Activated T-helper 1 cell treated with anti-CD3 and anti-CD28 coated beads, Interleukin-12 subunit alpha, Interleukin-12 subunit beta, Interleukin-2, Interleukin-4 antibody, amounts not matched to agents 30 ng/mL and 10 ng/mL and 1 ng/mL, durations not matched to agents 14 hours and 24 hours and 36 hours (primary cell): ENCODE measurements at regions of chr6 and their contacts with region 1.

Region 1: GRCh38 chr6:140809694-140810101 is 1323.0 kb upstream of the GJE1 start:
- DNase-seq: peak; percentile 30
- H3K4me3 Mint-ChIP-seq: no peak overlapping the region
- H3K27ac Mint-ChIP-seq: peak overlapping the region; percentile 75
- H3K4me1 Mint-ChIP-seq: peaks cover 16% of the 10 kb centered on the region
- H3K27me3 Mint-ChIP-seq: peaks cover 10% of the 10 kb centered on the region

Region 2: GRCh38 chr6:139600919-139601475 is 1208.7 kb before region 1 on chr6:
- intact Hi-C with region 1: loop called (anchors 10 kb)
- DNase-seq: no peak
- H3K4me3 Mint-ChIP-seq: no peak overlapping the region
- H3K27ac Mint-ChIP-seq: peak overlapping the region; percentile 10
- H3K4me1 Mint-ChIP-seq: peaks cover 7% of the 10 kb centered on the region
- H3K27me3 Mint-ChIP-seq: no peaks in the 10 kb centered on the region

Region 3: DNA sequence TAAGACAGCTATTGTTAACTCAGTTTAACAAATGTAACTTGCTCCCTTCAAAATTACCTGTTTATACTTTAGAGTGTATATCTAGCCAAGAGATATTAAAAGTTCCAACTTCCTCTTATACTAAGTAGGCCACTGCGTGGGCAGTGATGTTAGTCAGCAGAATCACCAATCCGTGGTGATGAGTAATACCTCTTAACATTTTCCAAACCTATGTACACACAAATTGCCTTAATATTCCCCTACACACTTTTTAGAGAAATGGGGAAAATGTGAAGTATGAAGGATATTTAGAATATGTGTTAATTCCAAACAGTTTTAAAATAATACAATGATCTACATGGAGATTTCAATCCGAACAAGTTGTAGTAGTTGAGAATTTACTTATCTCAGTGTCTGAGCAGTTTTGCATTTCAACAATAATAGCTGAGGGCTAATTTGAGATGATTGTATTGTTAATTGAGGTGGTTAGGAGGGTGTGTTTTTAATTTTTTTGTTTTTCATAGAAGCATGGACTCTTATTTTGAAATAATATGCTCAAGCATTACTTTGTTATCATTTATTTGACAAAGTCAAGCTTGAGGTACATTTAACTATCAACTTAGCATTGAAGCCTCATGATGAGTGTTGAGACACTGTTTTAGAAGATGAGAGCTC is 323.5 kb before region 1 on chr6:
- intact Hi-C with region 1: loop called (anchors 2 kb)
- DNase-seq: no peak
- H3K4me3 Mint-ChIP-seq: peak overlapping the region; percentile 51
- H3K27ac Mint-ChIP-seq: peak overlapping the region; percentile 41
- H3K4me1 Mint-ChIP-seq: peaks cover 24% of the 10 kb centered on the region
- H3K27me3 Mint-ChIP-seq: no peaks in the 10 kb centered on the region

Region 4: DNA sequence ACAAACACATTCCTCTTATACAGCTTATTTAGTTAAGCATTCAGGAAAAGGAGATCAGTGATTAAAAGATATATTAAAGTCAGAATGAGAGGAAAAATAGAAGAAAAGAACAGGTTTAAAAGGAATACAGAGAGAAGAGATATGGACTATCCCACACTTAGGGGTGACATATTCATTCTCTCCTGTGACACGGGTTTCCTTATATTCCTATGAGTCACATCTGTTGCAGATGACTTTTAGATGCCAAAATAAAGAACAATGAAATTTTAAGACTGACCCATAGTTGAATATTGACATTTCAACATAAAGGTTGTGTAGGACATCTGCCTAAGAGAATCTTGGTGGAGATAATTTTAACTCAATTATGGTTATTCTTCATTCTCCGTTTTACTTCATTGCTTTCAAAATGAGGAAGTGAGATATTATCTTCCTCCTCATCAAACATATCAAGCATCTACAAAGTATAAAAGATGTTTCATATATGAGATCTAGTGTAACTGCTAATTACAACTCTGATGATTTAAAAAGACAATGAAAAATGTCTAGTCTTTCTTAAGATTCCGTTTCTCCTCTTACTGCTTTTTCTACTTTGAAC is 98.6 kb before region 1 on chr6:
- intact Hi-C with region 1: loop called (anchors 1 kb)
- DNase-seq: no peak
- H3K4me3 Mint-ChIP-seq: no peak overlapping the region
- H3K27ac Mint-ChIP-seq: no peak overlapping the region
- H3K4me1 Mint-ChIP-seq: no peaks in the 10 kb centered on the region
- H3K27me3 Mint-ChIP-seq: no peaks in the 10 kb centered on the region

Region 5: GRCh38 chr6:140774080-140774505 is 35.6 kb before region 1 on chr6:
- intact Hi-C with region 1: loop called (anchors 1 kb)
- DNase-seq: peak; percentile 6
- H3K4me3 Mint-ChIP-seq: no peak overlapping the region
- H3K27ac Mint-ChIP-seq: no peak overlapping the region
- H3K4me1 Mint-ChIP-seq: peaks cover 23% of the 10 kb centered on the region
- H3K27me3 Mint-ChIP-seq: peaks cover 7% of the 10 kb centered on the region

Region 6: DNA sequence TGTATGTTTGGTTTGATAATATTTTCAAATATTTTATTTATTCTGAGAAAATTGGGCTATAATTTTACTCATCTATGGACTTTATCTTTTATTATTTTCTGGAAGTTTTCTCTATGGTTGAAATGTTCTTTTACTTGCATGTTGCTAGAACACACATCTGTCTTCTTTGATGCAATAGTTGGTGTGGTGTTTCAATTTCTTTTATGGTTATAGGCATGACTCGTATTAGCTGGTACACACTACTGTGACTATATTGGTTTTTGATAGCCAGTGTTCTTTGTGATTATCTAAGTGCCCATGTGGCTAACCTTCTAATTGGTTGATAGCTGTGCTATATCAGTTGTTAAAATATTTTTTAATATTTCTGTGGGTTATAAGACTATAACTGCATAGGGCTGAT is 20.2 kb before region 1 on chr6:
- intact Hi-C with region 1: no loop called
- DNase-seq: no peak
- H3K4me3 Mint-ChIP-seq: no peak overlapping the region
- H3K27ac Mint-ChIP-seq: no peak overlapping the region
- H3K4me1 Mint-ChIP-seq: no peaks in the 10 kb centered on the region
- H3K27me3 Mint-ChIP-seq: peaks cover 8% of the 10 kb centered on the region

Region 7: GRCh38 chr6:140846503-140847261 is 37.0 kb after region 1 on chr6:
- intact Hi-C with region 1: no loop called
- DNase-seq: no peak
- H3K4me3 Mint-ChIP-seq: no peak overlapping the region
- H3K27ac Mint-ChIP-seq: no peak overlapping the region
- H3K4me1 Mint-ChIP-seq: no peaks in the 10 kb centered on the region
- H3K27me3 Mint-ChIP-seq: no peaks in the 10 kb centered on the region

Region 8: GRCh38 chr6:141483598-141484061 is 673.9 kb after region 1 on chr6:
- intact Hi-C with region 1: loop called (anchors 1 kb)
- DNase-seq: peak; percentile 51
- H3K4me3 Mint-ChIP-seq: peak overlapping the region; percentile 87
- H3K27ac Mint-ChIP-seq: peak overlapping the region; percentile 98
- H3K4me1 Mint-ChIP-seq: peaks cover 47% of the 10 kb centered on the region
- H3K27me3 Mint-ChIP-seq: no peaks in the 10 kb centered on the region